Posterior vena cava (tissue), 2 donors: ENCODE measurements at regions of chr19 and their contacts with region 1.

Region 1: GRCh38 chr19:38647368-38647965 is at the start of gene ACTN4:
- DNase-seq: peak; percentile 100
- total RNA-seq, gene ACTN4: 661 to 878 TPM

Region 2: DNA sequence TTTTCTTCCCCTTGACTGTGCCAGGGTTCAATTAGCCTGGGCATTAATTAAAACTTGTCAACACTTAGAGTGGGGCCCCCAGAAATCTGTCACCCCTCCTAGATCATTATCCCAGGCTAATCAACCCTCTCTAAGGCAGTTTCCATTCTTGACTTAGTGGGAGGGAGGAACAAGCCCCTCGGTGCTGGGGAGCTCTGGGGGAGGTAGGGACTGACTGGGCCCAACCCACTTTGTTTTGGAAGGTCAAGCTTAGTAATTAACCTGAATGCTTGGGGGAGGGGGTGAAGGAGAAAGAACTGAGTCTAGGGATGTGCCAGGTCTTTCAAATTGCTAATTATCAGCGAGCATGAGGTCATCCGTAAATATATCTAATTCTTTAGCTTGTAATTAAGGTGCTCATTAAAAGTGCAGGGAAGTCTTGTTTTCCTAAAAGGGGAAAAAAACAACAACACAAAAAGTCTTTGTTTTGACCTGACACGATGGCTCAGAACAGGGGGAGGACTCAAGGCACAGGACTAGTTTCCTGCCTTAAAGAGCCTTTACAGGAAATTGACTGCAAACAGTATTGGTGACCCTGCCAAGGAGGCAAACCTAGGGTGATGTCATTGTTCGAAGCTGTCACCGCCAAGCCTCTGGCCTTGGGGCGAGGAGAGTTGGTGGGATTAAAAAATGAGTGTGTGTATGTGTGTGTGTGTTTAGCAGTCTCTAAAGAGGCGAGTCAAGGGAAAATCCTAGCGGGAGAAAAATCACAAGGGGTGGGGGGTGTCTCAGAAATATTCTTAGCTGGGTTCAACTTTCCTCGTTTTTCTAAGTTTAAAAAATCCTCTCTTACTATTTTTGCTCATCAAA is 19.4 kb after region 1 on chr19:
- intact Hi-C with region 1: no loop called
- DNase-seq: no peak

Region 3: DNA sequence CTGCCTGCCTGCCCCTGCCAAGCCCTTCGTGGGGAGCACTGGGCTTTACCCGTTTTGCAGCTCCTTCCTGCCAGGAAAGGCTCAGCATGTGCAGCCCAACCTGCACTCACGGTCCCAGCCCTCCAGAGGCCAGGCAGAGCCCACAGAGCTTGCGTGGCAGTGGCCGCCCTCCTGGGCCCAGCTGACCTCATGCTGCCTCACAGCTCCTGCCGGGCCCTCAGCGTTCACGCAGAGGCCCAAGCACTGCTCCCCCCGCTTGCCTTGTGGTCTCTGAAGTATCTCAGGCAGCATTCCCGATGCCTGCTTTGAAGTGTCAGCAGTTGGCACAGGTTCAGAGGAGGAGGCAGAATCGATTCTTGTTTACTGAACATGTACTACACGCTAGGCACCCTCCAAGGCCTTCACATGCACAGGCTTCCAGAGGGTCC is 64.3 kb after region 1 on chr19:
- intact Hi-C with region 1: loop called in 1 of 2 experiments (anchors 5 kb)
- DNase-seq: no peak